SK-N-SH (cell line): ENCODE measurements at regions of chr18 and their contacts with region 1.

Region 1: GRCh38 chr18:11937874-11938478 is 29.9 kb upstream of the MPPE1 start:
- DNase-seq: peak; percentile 72
- H3K4me3 ChIP-seq: no peak overlapping the region; a peak in 1 of 4 replicates
- H3K27ac ChIP-seq: no peak overlapping the region
- H3K4me1 ChIP-seq: no peaks in the 10 kb centered on the region
- H3K27me3 ChIP-seq: peaks cover 36% of the 10 kb centered on the region
- CTCF ChIP-seq: peak; percentile 87
- EP300 ChIP-seq: no peak
- RAD21 ChIP-seq: peak; percentile 73

Region 2: DNA sequence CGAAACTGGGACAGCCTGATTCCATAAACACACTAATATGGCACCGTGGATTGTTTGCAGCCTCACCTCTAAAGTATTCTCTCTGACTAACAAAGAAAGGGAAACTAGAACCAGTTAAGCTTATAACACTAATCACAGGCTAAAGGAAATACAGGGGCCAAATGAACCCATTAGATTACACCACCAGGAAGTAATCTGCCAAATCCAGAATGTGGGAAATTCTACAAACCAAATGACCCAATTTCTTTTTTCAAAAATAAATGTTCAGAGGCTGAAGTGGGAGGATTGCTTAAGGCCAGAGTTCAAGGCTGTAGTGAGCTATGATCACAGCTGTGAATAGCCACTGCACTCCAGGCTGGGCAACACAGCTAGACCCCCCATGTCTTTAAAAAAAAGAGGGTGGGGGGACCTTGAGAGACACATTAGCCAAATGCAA is 28.4 kb before region 1 on chr18:
- CTCF ChIA-PET with region 1: interaction called, 10 read pairs
- POLR2A ChIA-PET with region 1: no interaction called
- DNase-seq: no peak
- H3K4me3 ChIP-seq: no peak overlapping the region
- H3K27ac ChIP-seq: no peak overlapping the region
- H3K4me1 ChIP-seq: peaks cover 0 to 6% of the 10 kb centered on the region in 2 experiments; a peak in 2 of 4 replicates
- H3K27me3 ChIP-seq: no peaks in the 10 kb centered on the region
- CTCF ChIP-seq: no peak
- EP300 ChIP-seq: no peak
- RAD21 ChIP-seq: no peak

Region 3: GRCh38 chr18:11925800-11926481 is 12.0 kb before region 1 on chr18:
- CTCF ChIA-PET with region 1: interaction called, 13 read pairs
- POLR2A ChIA-PET with region 1: no interaction called
- DNase-seq: no peak
- H3K4me3 ChIP-seq: no peak overlapping the region
- H3K27ac ChIP-seq: no peak overlapping the region
- H3K4me1 ChIP-seq: no peaks in the 10 kb centered on the region
- H3K27me3 ChIP-seq: peaks cover 54% of the 10 kb centered on the region
- CTCF ChIP-seq: no peak
- EP300 ChIP-seq: no peak
- RAD21 ChIP-seq: no peak

Region 4: DNA sequence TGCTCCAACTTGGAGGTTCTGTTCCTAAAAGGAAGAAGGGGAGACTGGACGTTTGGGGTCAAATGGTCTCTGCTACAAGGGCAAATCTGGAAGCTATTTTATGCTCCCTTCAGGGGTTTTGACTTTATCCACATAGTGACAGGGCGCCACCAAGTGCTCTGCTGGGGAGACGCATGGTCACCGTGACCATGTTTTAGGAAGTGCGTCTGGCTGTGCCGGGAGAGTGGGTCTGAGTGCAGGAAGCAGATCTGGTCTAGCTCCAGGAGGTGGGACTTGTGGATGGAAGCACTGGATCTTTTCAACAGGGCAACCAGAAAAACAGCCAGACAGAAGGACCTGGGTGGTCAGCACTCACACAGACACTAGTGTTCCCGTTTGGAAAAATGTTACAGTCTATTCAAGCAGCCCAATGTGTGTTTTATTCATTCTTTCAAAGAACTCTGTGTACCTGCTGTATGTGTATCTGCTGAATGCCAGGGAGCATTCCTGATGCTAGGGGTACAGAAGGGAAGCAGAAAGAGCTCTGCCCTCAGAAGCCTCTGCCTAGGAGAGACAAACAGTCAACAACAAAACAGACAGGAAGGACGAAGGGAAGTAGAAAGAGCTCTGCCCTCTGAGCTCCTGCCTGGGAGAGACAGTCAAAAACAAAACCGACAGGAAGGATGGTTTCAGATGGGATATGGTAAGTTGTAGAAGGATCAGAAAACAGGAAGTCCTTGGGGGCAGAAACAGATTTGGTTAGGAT is 57.6 kb after region 1 on chr18:
- CTCF ChIA-PET with region 1: interaction called, 95 read pairs
- POLR2A ChIA-PET with region 1: no interaction called
- DNase-seq: peak; percentile 74
- H3K4me3 ChIP-seq: no peak overlapping the region; a peak in 1 of 4 replicates
- H3K27ac ChIP-seq: no peak overlapping the region
- H3K4me1 ChIP-seq: no peaks in the 10 kb centered on the region
- H3K27me3 ChIP-seq: peaks cover 79% of the 10 kb centered on the region
- CTCF ChIP-seq: peak; percentile 63
- EP300 ChIP-seq: no peak
- RAD21 ChIP-seq: peak; percentile 75

Region 5: DNA sequence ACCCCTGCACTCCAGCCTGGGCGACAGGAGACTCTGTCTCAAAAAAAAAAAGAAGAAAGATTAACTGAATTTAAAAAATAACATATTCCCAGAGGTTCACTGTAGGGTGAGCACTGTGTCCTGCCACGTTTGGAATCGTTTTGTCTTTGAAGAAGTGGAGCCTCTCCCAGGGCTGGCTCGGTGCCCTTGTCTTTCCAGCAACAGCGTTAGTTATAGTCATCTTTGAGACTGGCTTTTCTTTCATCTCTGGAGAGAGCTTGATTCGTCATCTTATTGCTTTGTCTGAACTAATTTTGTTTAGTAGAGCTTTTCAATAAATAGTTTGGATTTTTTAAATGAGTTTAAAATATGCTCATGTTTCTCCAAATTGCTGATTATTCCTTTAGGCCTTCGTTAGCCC is 93.9 kb after region 1 on chr18:
- CTCF ChIA-PET with region 1: interaction called, 117 read pairs
- POLR2A ChIA-PET with region 1: no interaction called
- DNase-seq: no peak
- H3K4me3 ChIP-seq: no peak overlapping the region
- H3K27ac ChIP-seq: no peak overlapping the region
- H3K4me1 ChIP-seq: no peaks in the 10 kb centered on the region
- H3K27me3 ChIP-seq: peaks cover 82% of the 10 kb centered on the region
- CTCF ChIP-seq: no peak
- EP300 ChIP-seq: no peak
- RAD21 ChIP-seq: no peak

Region 6: GRCh38 chr18:12236934-12237832 is 299.2 kb after region 1 on chr18:
- CTCF ChIA-PET with region 1: interaction called, 12 read pairs
- POLR2A ChIA-PET with region 1: no interaction called
- DNase-seq: peak; percentile 90
- H3K4me3 ChIP-seq: peak overlapping the region in 1 of 2 experiments; percentile 24; a peak in 1 of 4 replicates
- H3K27ac ChIP-seq: no peak overlapping the region
- H3K4me1 ChIP-seq: peaks cover 0 to 3% of the 10 kb centered on the region in 2 experiments; a peak in 1 of 4 replicates
- H3K27me3 ChIP-seq: peaks cover 69% of the 10 kb centered on the region; the same call in 1 of the 2 replicates
- CTCF ChIP-seq: peak; percentile 90
- EP300 ChIP-seq: no peak
- RAD21 ChIP-seq: peak; percentile 56